Activated CD4-positive, alpha-beta T cell treated with anti-CD3 and anti-CD28 coated beads, Interleukin-2, amount 10 ng/mL, durations not matched to agents 24 days and 14 days (primary cell): ENCODE measurements at regions of chr6 and their contacts with region 1.

Region 1: DNA sequence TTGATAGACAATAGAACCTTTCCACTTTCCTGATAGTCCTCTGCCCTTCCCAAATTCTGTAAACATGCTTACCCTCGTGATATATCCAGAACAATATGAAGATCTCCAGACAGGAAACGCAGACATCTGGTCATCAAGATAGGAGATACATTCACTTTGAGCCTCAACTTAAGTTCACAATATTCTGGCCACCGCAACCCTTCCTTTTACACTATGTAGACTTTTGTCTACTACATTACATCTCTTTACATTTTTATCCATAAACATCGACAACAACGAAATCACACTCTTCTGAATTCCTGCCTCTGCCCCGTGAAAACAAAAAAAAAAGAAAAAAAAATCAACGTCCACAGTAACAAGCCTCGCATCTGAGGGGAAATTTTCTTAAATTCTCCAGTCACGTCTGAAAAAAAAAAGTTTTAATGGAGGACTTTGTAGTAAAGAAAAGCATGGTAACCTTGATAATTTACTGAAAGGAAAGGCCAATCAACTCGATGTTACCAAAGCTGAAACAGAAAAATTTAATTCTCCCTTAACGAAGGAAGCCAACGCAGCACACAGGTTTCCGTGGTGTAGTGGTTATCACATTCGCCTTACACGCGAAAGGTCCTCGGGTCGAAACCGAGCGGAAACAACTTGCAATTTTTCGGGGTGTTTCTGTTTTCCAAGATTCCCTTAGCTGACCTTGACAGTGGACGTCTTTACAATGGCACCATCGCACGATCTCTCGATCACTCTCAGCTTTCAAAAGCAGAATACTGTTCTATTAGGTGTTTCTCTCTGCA is 21.8 kb downstream of the POM121L2 start:
- DNase-seq: no peak
- H3K4me3 Mint-ChIP-seq: no peak overlapping the region
- H3K27ac Mint-ChIP-seq: no peak overlapping the region
- H3K4me1 Mint-ChIP-seq: no peaks in the 10 kb centered on the region
- H3K27me3 Mint-ChIP-seq: peaks cover 78% of the 10 kb centered on the region

Region 2: GRCh38 chr6:28775405-28776129 is 1485.3 kb after region 1 on chr6:
- intact Hi-C with region 1: loop called (anchors 2 kb)
- DNase-seq: no peak
- H3K4me3 Mint-ChIP-seq: no peak overlapping the region
- H3K27ac Mint-ChIP-seq: peak overlapping the region; percentile 72
- H3K4me1 Mint-ChIP-seq: peaks cover 5% of the 10 kb centered on the region
- H3K27me3 Mint-ChIP-seq: peaks cover 92% of the 10 kb centered on the region